ENCODE measurements at regions of chr19 and their contacts with region 1.

Region 1: DNA sequence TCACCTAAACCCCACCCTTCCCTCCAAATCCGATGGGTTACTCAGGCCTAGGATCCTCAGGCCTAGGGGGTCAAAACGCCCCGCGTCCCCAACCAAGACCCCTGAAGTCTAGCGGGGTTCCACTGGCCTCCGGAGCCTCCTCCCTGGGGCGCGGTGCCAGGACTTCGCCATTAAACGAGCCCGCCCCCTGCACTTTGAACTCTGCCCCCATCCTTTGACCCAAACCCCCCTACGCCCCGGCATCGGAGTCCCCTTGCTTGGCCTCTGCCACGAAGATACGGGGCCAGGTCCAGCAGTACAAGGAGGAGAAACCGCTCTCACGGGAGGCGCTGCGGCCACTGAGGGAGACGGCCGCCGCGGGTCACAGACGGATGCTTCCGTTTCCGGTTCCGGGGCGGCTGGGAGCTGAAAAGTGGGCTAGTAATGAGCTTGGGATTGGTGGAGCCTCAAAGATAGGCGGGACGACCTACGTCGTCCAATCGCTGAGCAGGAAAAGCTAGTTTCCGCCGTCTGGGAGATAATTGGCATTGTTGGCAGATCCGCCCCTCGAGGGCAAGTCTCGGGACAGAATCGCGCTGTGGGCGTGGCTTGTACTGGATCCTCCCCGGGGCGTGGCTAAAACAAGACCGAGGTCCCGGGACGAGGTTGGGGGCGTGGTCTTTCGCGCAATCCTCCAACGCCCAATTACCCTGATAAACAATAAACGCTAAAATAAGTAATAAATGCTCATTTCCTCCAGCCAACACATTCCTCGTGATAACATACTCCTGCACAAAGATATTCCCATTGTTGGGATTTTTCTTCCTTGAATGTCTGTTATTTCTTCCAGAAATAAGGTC is 5.7 kb upstream of the ZNF77 start:
- DNase-seq: peak; percentile 98 to 100 (median 100)
- ATAC-seq: peak; percentile 96
- H3K4me3 ChIP-seq: peak overlapping the region; percentile 93
- H3K4me3 Mint-ChIP-seq: peak overlapping the region; percentile 86 to 98 (median 96)
- H3K27ac ChIP-seq: peak overlapping the region; percentile 87
- H3K27ac Mint-ChIP-seq: peak overlapping the region; percentile 91 to 100 (median 97)
- H3K4me1 ChIP-seq: peaks cover 9 to 11% of the 10 kb centered on the region in 2 donors
- H3K4me1 Mint-ChIP-seq: peaks cover 15 to 34% (median 29%) of the 10 kb centered on the region in 7 donors
- H3K27me3 ChIP-seq: no peaks in the 10 kb centered on the region
- H3K27me3 Mint-ChIP-seq: no peaks in the 10 kb centered on the region

Region 2: GRCh38 chr19:2648528-2648937 is 302.0 kb before region 1 on chr19:
- CTCF ChIA-PET with region 1: interaction called, 6 read pairs
- POLR2A ChIA-PET with region 1: no interaction called
- intact Hi-C with region 1: loop called in 1 of 2 experiments (anchors 2 kb)
- DNase-seq: peak; percentile 56 to 78 (median 71)
- ATAC-seq: peak; percentile 95
- H3K4me3 ChIP-seq: no peak overlapping the region
- H3K4me3 Mint-ChIP-seq: no peak overlapping the region
- H3K27ac ChIP-seq: no peak overlapping the region
- H3K27ac Mint-ChIP-seq: no peak overlapping the region
- H3K4me1 ChIP-seq: no peaks in the 10 kb centered on the region
- H3K4me1 Mint-ChIP-seq: peaks cover 0 to 2% (median 0%) of the 10 kb centered on the region in 7 donors
- H3K27me3 ChIP-seq: no peaks in the 10 kb centered on the region
- H3K27me3 Mint-ChIP-seq: peaks cover 0 to 2% (median 0%) of the 10 kb centered on the region in 5 donors

Region 3: DNA sequence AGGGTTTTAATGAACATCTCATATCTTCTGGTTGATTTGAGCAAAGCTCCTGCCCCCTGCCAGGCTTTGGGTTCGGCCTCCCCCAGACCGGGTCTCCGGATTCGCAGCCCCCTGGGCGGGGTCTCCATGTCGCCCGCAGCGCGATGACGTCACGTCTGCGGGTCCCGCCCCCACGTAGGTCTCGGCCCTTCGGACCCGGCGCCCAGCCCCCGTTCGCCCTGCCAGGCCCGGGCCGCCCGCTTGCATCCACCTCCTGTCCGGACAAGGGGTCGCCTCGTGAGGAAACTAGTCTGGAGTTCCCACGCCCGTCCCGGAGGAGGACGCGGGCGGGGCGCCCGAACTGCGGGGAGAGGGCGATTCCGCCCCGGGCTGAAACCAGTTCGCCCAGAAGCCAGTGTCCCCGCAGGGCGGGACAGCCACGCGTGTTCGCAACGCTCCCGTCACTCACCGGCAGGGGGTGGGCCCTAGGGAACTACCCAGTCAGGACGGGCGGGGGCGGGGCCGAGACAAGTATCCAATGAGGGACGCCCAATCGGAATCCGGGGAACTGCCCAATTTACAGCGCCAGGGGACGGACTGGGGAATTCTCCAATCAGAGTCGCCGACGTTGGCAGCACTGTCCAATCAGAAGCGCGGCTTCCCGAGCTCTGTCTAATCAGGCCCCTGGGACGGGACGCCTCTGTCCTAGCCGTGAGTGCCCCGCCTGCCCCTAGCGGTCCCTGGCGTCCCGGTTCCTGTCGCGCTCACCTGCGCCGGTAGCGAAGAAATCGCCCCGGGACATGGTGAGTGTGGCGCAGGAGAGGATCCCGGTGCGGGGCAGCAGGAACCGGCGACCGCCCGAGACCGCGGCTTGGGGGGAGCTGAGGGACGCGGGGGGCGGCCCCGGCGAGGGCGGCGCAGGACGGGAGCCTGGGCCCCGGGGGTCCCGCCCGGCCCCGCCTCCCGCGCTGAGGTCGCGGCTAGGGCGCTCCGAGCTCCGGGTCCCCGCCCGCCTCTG is 109.4 kb before region 1 on chr19 and contains the start of gene ZNF555:
- CTCF ChIA-PET with region 1: no interaction called
- POLR2A ChIA-PET with region 1: no interaction called
- intact Hi-C with region 1: loop called in 1 of 2 experiments (anchors 1 kb)
- DNase-seq: peak; percentile 77 to 99 (median 97)
- ATAC-seq: peak; percentile 98
- H3K4me3 ChIP-seq: peak within 1 kb of the TSS; percentile 94
- H3K4me3 Mint-ChIP-seq: peak within 1 kb of the TSS; percentile 85 to 96 (median 92)
- H3K27ac ChIP-seq: peak within 1 kb of the TSS; percentile 75
- H3K27ac Mint-ChIP-seq: peak within 1 kb of the TSS; percentile 70 to 90 (median 82)
- H3K4me1 ChIP-seq: peaks cover 3 to 13% of the 10 kb centered on the region in 2 donors
- H3K4me1 Mint-ChIP-seq: peaks cover 5 to 33% (median 18%) of the 10 kb centered on the region in 7 donors
- H3K27me3 ChIP-seq: no peaks in the 10 kb centered on the region
- H3K27me3 Mint-ChIP-seq: peaks cover 0 to 7% (median 0%) of the 10 kb centered on the region in 5 donors
- total RNA-seq, gene ZNF555: 1.2 to 10.0 (median 2.7) TPM

Region 4: GRCh38 chr19:2962045-2962561 is 11.6 kb after region 1 on chr19:
- CTCF ChIA-PET with region 1: interaction called, 6 read pairs
- POLR2A ChIA-PET with region 1: interaction called, 3 read pairs
- intact Hi-C with region 1: loop called in 1 of 2 experiments (anchors 1 kb)
- DNase-seq: peak in 8 of 9 donors; percentile 44 to 84 (median 74)
- ATAC-seq: peak; percentile 99
- H3K4me3 ChIP-seq: no peak overlapping the region
- H3K4me3 Mint-ChIP-seq: peak overlapping the region in 4 of 10 donors; percentile 1 to 46 (median 40)
- H3K27ac ChIP-seq: no peak overlapping the region
- H3K27ac Mint-ChIP-seq: peak overlapping the region in 7 of 9 donors; percentile 49 to 90 (median 82)
- H3K4me1 ChIP-seq: no peaks in the 10 kb centered on the region
- H3K4me1 Mint-ChIP-seq: peaks cover 0 to 6% (median 6%) of the 10 kb centered on the region in 7 donors
- H3K27me3 ChIP-seq: no peaks in the 10 kb centered on the region
- H3K27me3 Mint-ChIP-seq: peaks cover 0 to 5% (median 0%) of the 10 kb centered on the region in 5 donors

Region 5: GRCh38 chr19:3062168-3063102 is 111.9 kb after region 1 on chr19 and contains the start of gene TLE5:
- CTCF ChIA-PET with region 1: interaction called, 5 read pairs
- POLR2A ChIA-PET with region 1: interaction called, 13 read pairs
- intact Hi-C with region 1: loop called (anchors 1 to 2 kb)
- DNase-seq: peak; percentile 69 to 79 (median 76)
- ATAC-seq: peak; percentile 78
- H3K4me3 ChIP-seq: peak within 1 kb of the TSS; percentile 99
- H3K4me3 Mint-ChIP-seq: peak within 1 kb of the TSS; percentile 88 to 99 (median 94)
- H3K27ac ChIP-seq: peak within 1 kb of the TSS; percentile 90
- H3K27ac Mint-ChIP-seq: peak within 1 kb of the TSS; percentile 90 to 98 (median 95)
- H3K4me1 ChIP-seq: peaks cover 24 to 43% of the 10 kb centered on the region in 2 donors
- H3K4me1 Mint-ChIP-seq: peaks cover 13 to 45% (median 29%) of the 10 kb centered on the region in 7 donors
- H3K27me3 ChIP-seq: no peaks in the 10 kb centered on the region
- H3K27me3 Mint-ChIP-seq: peaks cover 0 to under 1% (median 0%) of the 10 kb centered on the region in 5 donors
- total RNA-seq, gene TLE5: 658 to 1,102 (median 755) TPM

Region 6: GRCh38 chr19:3125900-3126524 is 175.5 kb after region 1 on chr19:
- CTCF ChIA-PET with region 1: interaction called, 5 read pairs
- POLR2A ChIA-PET with region 1: no interaction called
- intact Hi-C with region 1: loop called in 1 of 2 experiments (anchors 1 kb)
- DNase-seq: peak in 8 of 9 donors; percentile 32 to 74 (median 64)
- ATAC-seq: peak; percentile 92
- H3K4me3 ChIP-seq: no peak overlapping the region
- H3K4me3 Mint-ChIP-seq: no peak overlapping the region
- H3K27ac ChIP-seq: no peak overlapping the region
- H3K27ac Mint-ChIP-seq: no peak overlapping the region
- H3K4me1 ChIP-seq: no peaks in the 10 kb centered on the region
- H3K4me1 Mint-ChIP-seq: peaks cover 0 to 21% (median 5%) of the 10 kb centered on the region in 7 donors
- H3K27me3 ChIP-seq: no peaks in the 10 kb centered on the region
- H3K27me3 Mint-ChIP-seq: peaks cover 0 to 6% (median 2%) of the 10 kb centered on the region in 5 donors

Region 7: GRCh38 chr19:3434712-3435553 is 484.4 kb after region 1 on chr19:
- CTCF ChIA-PET with region 1: interaction called, 4 read pairs
- POLR2A ChIA-PET with region 1: no interaction called
- intact Hi-C with region 1: loop called (anchors 1 to 10 kb)
- DNase-seq: peak; percentile 91 to 97 (median 96)
- ATAC-seq: peak; percentile 99
- H3K4me3 ChIP-seq: peak overlapping the region; percentile 70
- H3K4me3 Mint-ChIP-seq: peak overlapping the region; percentile 87 to 100 (median 96)
- H3K27ac ChIP-seq: peak overlapping the region; percentile 86
- H3K27ac Mint-ChIP-seq: peak overlapping the region; percentile 95 to 99 (median 98)
- H3K4me1 ChIP-seq: peaks cover 9 to 11% of the 10 kb centered on the region in 2 donors
- H3K4me1 Mint-ChIP-seq: peaks cover 7 to 18% (median 14%) of the 10 kb centered on the region in 7 donors
- H3K27me3 ChIP-seq: no peaks in the 10 kb centered on the region
- H3K27me3 Mint-ChIP-seq: no peaks in the 10 kb centered on the region